Naive thymus-derived CD4-positive, alpha-beta T cell (primary cell): ENCODE measurements at regions of chr6 and their contacts with region 1.

Region 1: GRCh38 chr6:50128420-50129005 is 78.8 kb upstream of the DEFB112 start:
- DNase-seq: no peak
- ATAC-seq: no peak
- H3K4me3 ChIP-seq: no peak overlapping the region
- H3K4me3 Mint-ChIP-seq: no peak overlapping the region
- H3K27ac ChIP-seq: no peak overlapping the region
- H3K27ac Mint-ChIP-seq: no peak overlapping the region
- H3K4me1 ChIP-seq: no peaks in the 10 kb centered on the region
- H3K4me1 Mint-ChIP-seq: no peaks in the 10 kb centered on the region
- H3K27me3 ChIP-seq: no peaks in the 10 kb centered on the region
- H3K27me3 Mint-ChIP-seq: no peaks in the 10 kb centered on the region

Region 2: GRCh38 chr6:50185006-50185405 is 56.5 kb after region 1 on chr6:
- CTCF ChIA-PET with region 1: no interaction called
- POLR2A ChIA-PET with region 1: no interaction called
- intact Hi-C with region 1: no loop called
- DNase-seq: no peak
- ATAC-seq: no peak
- H3K4me3 ChIP-seq: no peak overlapping the region
- H3K4me3 Mint-ChIP-seq: no peak overlapping the region
- H3K27ac ChIP-seq: no peak overlapping the region
- H3K27ac Mint-ChIP-seq: no peak overlapping the region
- H3K4me1 ChIP-seq: no peaks in the 10 kb centered on the region
- H3K4me1 Mint-ChIP-seq: no peaks in the 10 kb centered on the region
- H3K27me3 ChIP-seq: no peaks in the 10 kb centered on the region
- H3K27me3 Mint-ChIP-seq: no peaks in the 10 kb centered on the region

Region 3: GRCh38 chr6:50602292-50602691 is 473.8 kb after region 1 on chr6:
- CTCF ChIA-PET with region 1: no interaction called
- POLR2A ChIA-PET with region 1: no interaction called
- intact Hi-C with region 1: loop called (anchors 1 to 2 kb)
- DNase-seq: peak in 2 of 9 donors; percentile 7 to 15
- ATAC-seq: no peak
- H3K4me3 ChIP-seq: no peak overlapping the region
- H3K4me3 Mint-ChIP-seq: no peak overlapping the region
- H3K27ac ChIP-seq: no peak overlapping the region
- H3K27ac Mint-ChIP-seq: no peak overlapping the region
- H3K4me1 ChIP-seq: no peaks in the 10 kb centered on the region
- H3K4me1 Mint-ChIP-seq: no peaks in the 10 kb centered on the region
- H3K27me3 ChIP-seq: no peaks in the 10 kb centered on the region
- H3K27me3 Mint-ChIP-seq: no peaks in the 10 kb centered on the region

Region 4: DNA sequence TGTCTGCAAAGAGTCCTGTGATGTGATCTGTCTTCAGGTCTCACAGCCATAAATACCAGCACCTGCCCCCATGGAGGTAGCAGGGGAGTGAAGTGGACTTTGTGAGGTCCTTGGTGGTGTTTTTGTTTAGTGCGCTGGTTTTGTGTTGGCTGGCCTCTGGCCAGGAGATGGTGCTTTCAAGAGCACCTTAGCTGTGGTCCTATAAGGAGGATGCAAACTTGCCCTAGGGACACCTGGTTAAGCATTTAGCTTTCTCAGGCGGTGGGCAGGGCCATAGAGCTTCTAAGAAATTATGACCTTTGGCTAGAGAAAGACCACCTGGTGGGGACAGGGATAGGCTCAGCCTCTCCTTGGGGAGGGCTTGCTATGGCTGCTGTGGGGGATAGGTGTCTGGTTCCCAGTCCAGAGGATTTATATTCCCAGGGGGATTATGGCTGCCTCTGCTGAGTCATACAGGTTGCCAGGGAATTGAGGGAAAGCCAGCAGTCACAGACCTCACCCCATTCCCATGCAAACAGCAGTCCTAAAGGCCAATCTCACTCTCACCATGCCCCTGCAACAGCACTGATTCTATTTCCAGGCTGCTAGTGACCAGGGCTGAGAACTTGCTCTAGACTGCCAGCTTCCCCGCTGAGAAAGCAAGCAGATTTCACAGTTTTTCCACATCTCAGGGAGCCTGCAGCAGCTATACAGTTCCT is 949.5 kb after region 1 on chr6:
- CTCF ChIA-PET with region 1: no interaction called
- POLR2A ChIA-PET with region 1: no interaction called
- intact Hi-C with region 1: no loop called
- DNase-seq: no peak
- ATAC-seq: no peak
- H3K4me3 ChIP-seq: no peak overlapping the region
- H3K4me3 Mint-ChIP-seq: no peak overlapping the region
- H3K27ac ChIP-seq: no peak overlapping the region
- H3K27ac Mint-ChIP-seq: no peak overlapping the region
- H3K4me1 ChIP-seq: no peaks in the 10 kb centered on the region
- H3K4me1 Mint-ChIP-seq: no peaks in the 10 kb centered on the region
- H3K27me3 ChIP-seq: no peaks in the 10 kb centered on the region
- H3K27me3 Mint-ChIP-seq: peaks cover 0 to 4% (median 0%) of the 10 kb centered on the region in 5 donors